B cell (primary cell): ENCODE measurements at regions of chr1 and their contacts with region 1.

Region 1: GRCh38 chr1:52365746-52366516 is at the start of gene CC2D1B:
- DNase-seq: peak; percentile 100
- ATAC-seq: peak; percentile 92
- H3K4me3 ChIP-seq: peak within 1 kb of the TSS; percentile 73 to 88 (median 79)
- H3K4me3 Mint-ChIP-seq: peak within 1 kb of the TSS; percentile 96
- H3K27ac ChIP-seq: peak within 1 kb of the TSS; percentile 71 to 90
- H3K27ac Mint-ChIP-seq: peak within 1 kb of the TSS; percentile 93
- H3K4me1 ChIP-seq: peaks cover 18 to 20% of the 10 kb centered on the region in 2 donors
- H3K4me1 Mint-ChIP-seq: peaks cover 34% of the 10 kb centered on the region
- H3K27me3 ChIP-seq: no peaks in the 10 kb centered on the region
- H3K27me3 Mint-ChIP-seq: peaks cover 4% of the 10 kb centered on the region
- CTCF ChIP-seq: no peak
- total RNA-seq, gene CC2D1B: 79.7 and 80.4 TPM in 2 replicates

Region 2: GRCh38 chr1:51519048-51519864 is 846.7 kb before region 1 on chr1 and contains the start of gene EPS15:
- CTCF ChIA-PET with region 1: no interaction called
- POLR2A ChIA-PET with region 1: no interaction called
- intact Hi-C with region 1: loop called (anchors 5 kb)
- DNase-seq: peak; percentile 88
- ATAC-seq: peak; percentile 75
- H3K4me3 ChIP-seq: peak within 1 kb of the TSS; percentile 65 to 93 (median 78)
- H3K4me3 Mint-ChIP-seq: peak within 1 kb of the TSS; percentile 96
- H3K27ac ChIP-seq: peak within 1 kb of the TSS; percentile 67 to 88
- H3K27ac Mint-ChIP-seq: peak within 1 kb of the TSS; percentile 91
- H3K4me1 ChIP-seq: peaks cover 31 to 38% of the 10 kb centered on the region in 2 donors
- H3K4me1 Mint-ChIP-seq: peaks cover 54% of the 10 kb centered on the region
- H3K27me3 ChIP-seq: no peaks in the 10 kb centered on the region
- H3K27me3 Mint-ChIP-seq: no peaks in the 10 kb centered on the region
- CTCF ChIP-seq: no peak
- total RNA-seq, gene EPS15: 151 and 163 TPM in 2 replicates

Region 3: DNA sequence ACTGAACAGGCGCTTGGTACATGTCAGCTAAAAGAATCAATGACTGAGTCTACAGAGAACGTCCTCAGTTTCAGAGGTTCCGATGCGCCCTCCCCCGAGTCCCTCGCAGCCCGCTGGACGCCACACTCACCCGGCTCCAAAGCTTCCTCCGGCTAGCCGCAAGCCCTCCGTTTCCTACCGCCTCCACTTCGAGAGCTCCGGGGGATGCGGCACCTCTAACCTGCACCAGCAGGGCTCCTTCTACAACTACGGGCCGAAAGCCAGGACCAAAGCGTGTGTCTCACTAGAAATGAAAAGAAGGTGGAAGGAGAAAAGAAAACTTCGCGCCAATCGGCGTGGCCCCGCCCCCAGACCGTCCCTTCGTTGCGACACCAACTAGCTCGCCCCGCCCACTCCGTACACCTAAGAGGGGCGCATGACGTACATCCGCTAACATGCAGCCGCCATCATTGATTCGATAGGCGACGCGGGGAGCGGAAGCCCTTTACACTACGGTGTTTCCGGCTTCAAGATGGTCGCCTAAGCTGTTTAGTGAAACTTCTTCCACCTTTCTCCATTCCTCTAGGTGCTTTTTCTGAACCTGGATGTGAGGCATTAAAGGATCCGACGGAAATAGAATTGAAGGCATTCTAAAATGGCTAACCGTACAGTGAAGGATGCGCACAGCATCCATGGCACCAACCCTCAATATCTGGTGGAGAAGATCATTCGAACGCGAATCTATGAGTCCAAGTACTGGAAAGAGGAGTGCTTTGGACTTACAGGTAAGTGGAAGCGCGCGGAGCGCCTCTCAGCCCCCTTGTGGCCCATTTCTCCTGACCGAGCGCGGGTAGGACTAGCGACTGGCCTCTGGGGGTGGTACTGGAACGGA is 38.4 kb after region 1 on chr1 and contains the starts of genes ORC1 and PRPF38A:
- CTCF ChIA-PET with region 1: interaction called, 18 read pairs
- POLR2A ChIA-PET with region 1: interaction called, 10 read pairs
- intact Hi-C with region 1: loop called (anchors 1 kb)
- DNase-seq: peak; percentile 98
- ATAC-seq: peak; percentile 98
- H3K4me3 ChIP-seq: peak within 1 kb of the TSS; percentile 76 to 99 (median 95)
- H3K4me3 Mint-ChIP-seq: peak within 1 kb of the TSS; percentile 100
- H3K27ac ChIP-seq: peak within 1 kb of the TSS; percentile 91 to 95
- H3K27ac Mint-ChIP-seq: peak within 1 kb of the TSS; percentile 96
- H3K4me1 ChIP-seq: peaks cover 15 to 22% of the 10 kb centered on the region in 2 donors
- H3K4me1 Mint-ChIP-seq: peaks cover 32% of the 10 kb centered on the region
- H3K27me3 ChIP-seq: no peaks in the 10 kb centered on the region
- H3K27me3 Mint-ChIP-seq: no peaks in the 10 kb centered on the region
- CTCF ChIP-seq: peak; percentile 60
- total RNA-seq, gene ORC1: 1.3 TPM in 2 replicates
- total RNA-seq, gene PRPF38A: 68.1 and 69.8 TPM in 2 replicates

Region 4: DNA sequence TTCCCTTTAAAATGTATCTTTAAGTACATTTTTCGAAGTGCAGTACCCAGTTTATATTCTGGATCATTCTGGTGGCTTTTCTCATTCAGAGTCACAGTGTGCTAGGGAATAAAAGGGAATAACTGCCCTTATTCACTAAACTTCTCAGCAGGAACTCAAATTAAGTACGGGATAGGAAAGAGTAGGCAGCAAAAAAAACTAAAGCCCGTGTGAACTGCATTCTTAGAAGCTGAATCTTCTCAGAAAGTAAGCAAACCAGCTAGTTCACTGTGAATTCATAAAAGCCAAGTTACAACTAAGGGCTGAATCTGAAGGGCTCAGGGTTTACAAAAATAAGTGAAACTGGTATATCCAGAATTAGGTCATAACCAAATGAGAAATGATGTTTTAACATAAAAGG is 60.4 kb after region 1 on chr1:
- CTCF ChIA-PET with region 1: no interaction called
- POLR2A ChIA-PET with region 1: no interaction called
- intact Hi-C with region 1: no loop called
- DNase-seq: no peak
- ATAC-seq: no peak
- H3K4me3 ChIP-seq: no peak overlapping the region
- H3K4me3 Mint-ChIP-seq: no peak overlapping the region
- H3K27ac ChIP-seq: peak overlapping the region in 1 of 2 donors; percentile 44
- H3K27ac Mint-ChIP-seq: no peak overlapping the region
- H3K4me1 ChIP-seq: peaks cover 0 to 11% of the 10 kb centered on the region in 2 donors
- H3K4me1 Mint-ChIP-seq: peaks cover 15% of the 10 kb centered on the region
- H3K27me3 ChIP-seq: no peaks in the 10 kb centered on the region
- H3K27me3 Mint-ChIP-seq: no peaks in the 10 kb centered on the region
- CTCF ChIP-seq: no peak

Region 5: DNA sequence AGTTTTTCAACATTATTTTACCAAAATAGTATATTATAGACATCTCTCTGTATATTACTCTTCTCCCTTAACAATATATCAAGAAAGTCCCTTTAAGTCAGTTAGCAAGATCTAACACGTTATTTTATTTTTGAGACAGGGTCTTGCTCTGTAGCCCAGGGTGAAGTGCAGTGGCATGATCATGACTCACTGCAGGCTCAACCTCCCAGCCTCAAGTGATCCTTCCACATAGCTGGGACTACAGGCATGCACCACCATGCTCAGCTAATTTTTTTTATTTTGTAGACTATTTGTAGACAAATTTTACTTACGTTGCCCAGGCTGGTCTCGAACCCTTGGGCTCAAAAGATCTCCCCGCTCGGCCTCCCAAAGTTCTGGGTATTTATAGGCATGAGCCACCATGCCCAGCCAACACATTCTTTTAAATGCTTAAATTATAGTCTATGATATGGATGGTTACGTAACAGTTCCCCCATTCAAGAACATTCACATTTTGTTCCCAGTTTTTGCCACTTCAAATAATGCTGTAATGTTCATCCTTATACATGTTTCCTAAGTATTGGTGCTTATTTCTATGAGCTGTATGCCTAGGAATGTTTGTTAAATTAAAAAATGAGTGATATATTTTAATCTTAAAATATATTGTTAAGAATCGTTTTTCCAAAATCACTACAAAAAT is 116.5 kb after region 1 on chr1:
- CTCF ChIA-PET with region 1: no interaction called
- POLR2A ChIA-PET with region 1: no interaction called
- intact Hi-C with region 1: no loop called
- DNase-seq: no peak
- ATAC-seq: no peak
- H3K4me3 ChIP-seq: no peak overlapping the region
- H3K4me3 Mint-ChIP-seq: no peak overlapping the region
- H3K27ac ChIP-seq: no peak overlapping the region
- H3K27ac Mint-ChIP-seq: no peak overlapping the region
- H3K4me1 ChIP-seq: peaks cover 7 to 8% of the 10 kb centered on the region in 2 donors
- H3K4me1 Mint-ChIP-seq: no peaks in the 10 kb centered on the region
- H3K27me3 ChIP-seq: no peaks in the 10 kb centered on the region
- H3K27me3 Mint-ChIP-seq: no peaks in the 10 kb centered on the region
- CTCF ChIP-seq: no peak

Region 6: GRCh38 chr1:52702886-52703787 is 337.2 kb after region 1 on chr1:
- CTCF ChIA-PET with region 1: no interaction called
- POLR2A ChIA-PET with region 1: no interaction called
- intact Hi-C with region 1: loop called (anchors 5 kb)
- DNase-seq: peak; percentile 93
- ATAC-seq: peak; percentile 86
- H3K4me3 ChIP-seq: peak overlapping the region in 4 of 5 experiments; percentile 37 to 57 (median 49)
- H3K4me3 Mint-ChIP-seq: peak overlapping the region; percentile 90
- H3K27ac ChIP-seq: peak overlapping the region; percentile 83 to 88
- H3K27ac Mint-ChIP-seq: peak overlapping the region; percentile 97
- H3K4me1 ChIP-seq: peaks cover 8 to 21% of the 10 kb centered on the region in 2 donors
- H3K4me1 Mint-ChIP-seq: peaks cover 24% of the 10 kb centered on the region
- H3K27me3 ChIP-seq: no peaks in the 10 kb centered on the region
- H3K27me3 Mint-ChIP-seq: peaks cover under 1% of the 10 kb centered on the region
- CTCF ChIP-seq: no peak

Region 7: DNA sequence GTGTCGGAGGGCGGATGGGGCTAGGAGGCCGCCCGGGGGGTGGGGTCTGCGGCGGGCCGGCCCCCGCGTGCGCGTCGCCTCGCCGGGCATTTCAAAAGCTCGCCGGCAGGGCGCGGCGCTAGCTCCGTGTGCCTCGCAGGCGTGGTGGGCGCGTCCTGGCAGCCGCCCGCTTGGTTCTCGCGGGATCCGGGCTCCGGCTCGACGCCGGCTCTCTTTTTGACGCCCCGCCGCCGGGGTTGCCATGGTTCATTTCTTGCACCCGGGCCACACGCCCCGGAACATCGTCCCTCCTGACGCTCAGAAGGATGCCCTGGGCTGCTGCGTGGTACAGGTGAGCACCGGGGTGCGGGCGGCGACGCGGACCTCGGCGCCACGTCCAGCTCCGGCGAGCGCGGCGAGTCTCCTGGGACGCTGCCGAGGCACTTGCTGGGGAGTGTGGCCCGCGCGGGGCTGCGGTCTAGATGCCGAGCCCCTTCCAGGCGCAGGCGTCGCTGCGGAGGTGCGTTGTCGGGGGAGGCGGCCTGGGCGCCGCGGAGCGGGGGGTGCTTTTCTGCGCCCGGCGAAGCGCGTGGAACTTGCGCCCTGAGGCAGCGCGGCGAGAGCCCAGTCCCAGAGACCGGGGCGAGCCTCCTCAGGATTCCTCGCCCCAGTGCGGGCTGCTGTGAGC is 476.8 kb after region 1 on chr1 and contains the start of gene ZYG11A:
- CTCF ChIA-PET with region 1: no interaction called
- POLR2A ChIA-PET with region 1: no interaction called
- intact Hi-C with region 1: loop called (anchors 5 kb)
- DNase-seq: peak; percentile 83
- ATAC-seq: peak; percentile 93
- H3K4me3 ChIP-seq: peak within 1 kb of the TSS; percentile 30 to 67 (median 52)
- H3K4me3 Mint-ChIP-seq: peak within 1 kb of the TSS; percentile 80
- H3K27ac ChIP-seq: peak within 1 kb of the TSS; percentile 33 to 51
- H3K27ac Mint-ChIP-seq: peak within 1 kb of the TSS; percentile 71
- H3K4me1 ChIP-seq: peaks cover 9 to 14% of the 10 kb centered on the region in 2 donors
- H3K4me1 Mint-ChIP-seq: peaks cover 11% of the 10 kb centered on the region
- H3K27me3 ChIP-seq: peaks cover 0 to 29% (median 5%) of the 10 kb centered on the region in 4 experiments
- H3K27me3 Mint-ChIP-seq: peaks cover 8% of the 10 kb centered on the region
- CTCF ChIP-seq: peak; percentile 43
- total RNA-seq, gene ZYG11A: 1.5 and 1.7 TPM in 2 replicates

Region 8: GRCh38 chr1:53196485-53197270 is 830.7 kb after region 1 on chr1 and contains the start of gene CPT2:
- CTCF ChIA-PET with region 1: no interaction called
- POLR2A ChIA-PET with region 1: no interaction called
- intact Hi-C with region 1: loop called (anchors 1 kb)
- DNase-seq: peak; percentile 88
- ATAC-seq: peak; percentile 99
- H3K4me3 ChIP-seq: peak within 1 kb of the TSS; percentile 72 to 91 (median 76)
- H3K4me3 Mint-ChIP-seq: peak within 1 kb of the TSS; percentile 97
- H3K27ac ChIP-seq: peak within 1 kb of the TSS; percentile 81 to 96
- H3K27ac Mint-ChIP-seq: peak within 1 kb of the TSS; percentile 95
- H3K4me1 ChIP-seq: peaks cover 16 to 20% of the 10 kb centered on the region in 2 donors
- H3K4me1 Mint-ChIP-seq: peaks cover 28% of the 10 kb centered on the region
- H3K27me3 ChIP-seq: no peaks in the 10 kb centered on the region
- H3K27me3 Mint-ChIP-seq: no peaks in the 10 kb centered on the region
- CTCF ChIP-seq: no peak
- total RNA-seq, gene CPT2: 16.7 and 19.8 TPM in 2 replicates

Region 9: DNA sequence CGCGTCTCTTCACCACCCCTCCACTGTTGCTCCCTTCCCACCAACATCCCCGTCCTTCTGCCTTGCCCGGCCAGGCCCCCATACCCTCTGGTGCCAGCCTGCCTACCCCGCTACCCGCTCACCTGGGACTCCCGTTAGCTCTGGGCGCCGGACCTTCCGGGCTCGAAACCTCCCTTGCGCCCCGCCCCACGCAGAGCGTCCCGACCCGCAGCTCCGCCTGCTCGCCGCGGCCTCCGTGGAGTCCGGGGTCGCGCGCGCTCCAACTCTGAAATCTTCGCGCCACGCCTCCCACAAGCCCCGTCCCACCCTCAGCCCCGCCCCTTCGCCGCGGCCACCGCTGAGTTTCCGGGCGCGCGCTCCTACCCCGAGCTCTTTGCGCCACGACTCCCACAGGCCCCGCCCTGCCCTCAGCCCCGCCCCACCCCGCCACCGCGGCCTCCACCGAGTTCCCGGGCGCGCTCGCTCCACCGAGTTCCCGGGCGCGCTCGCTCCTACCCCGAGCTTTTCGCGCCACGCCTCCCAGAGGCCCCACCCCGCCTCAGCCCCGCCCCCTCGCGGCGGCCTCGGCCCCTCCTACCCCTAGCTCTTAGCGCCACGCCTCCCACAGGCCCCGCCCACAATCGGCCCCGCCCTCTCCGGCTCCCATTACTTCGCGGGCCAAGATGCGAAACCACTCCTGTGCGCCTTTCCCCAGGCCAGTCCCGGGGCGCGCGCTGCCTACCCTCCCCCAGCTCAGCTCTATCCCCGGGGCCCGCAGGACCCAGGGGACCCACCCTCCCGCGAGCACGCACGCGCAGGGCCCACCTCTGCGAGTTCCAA is 1579.7 kb after region 1 on chr1 and contains the start of gene IFT25:
- CTCF ChIA-PET with region 1: no interaction called
- POLR2A ChIA-PET with region 1: no interaction called
- intact Hi-C with region 1: loop called (anchors 10 kb)
- DNase-seq: peak; percentile 98
- ATAC-seq: peak; percentile 79
- H3K4me3 ChIP-seq: peak within 1 kb of the TSS; percentile 65 to 95 (median 87)
- H3K4me3 Mint-ChIP-seq: peak within 1 kb of the TSS; percentile 99
- H3K27ac ChIP-seq: peak within 1 kb of the TSS; percentile 65 to 81
- H3K27ac Mint-ChIP-seq: peak within 1 kb of the TSS; percentile 96
- H3K4me1 ChIP-seq: peaks cover 16 to 20% of the 10 kb centered on the region in 2 donors
- H3K4me1 Mint-ChIP-seq: peaks cover 33% of the 10 kb centered on the region
- H3K27me3 ChIP-seq: no peaks in the 10 kb centered on the region
- H3K27me3 Mint-ChIP-seq: no peaks in the 10 kb centered on the region
- CTCF ChIP-seq: no peak
- total RNA-seq, gene IFT25: 45.7 and 48.1 TPM in 2 replicates